CD4-positive, alpha-beta T cell (primary cell): ENCODE measurements at regions of chr4 and their contacts with region 1.

Region 1: DNA sequence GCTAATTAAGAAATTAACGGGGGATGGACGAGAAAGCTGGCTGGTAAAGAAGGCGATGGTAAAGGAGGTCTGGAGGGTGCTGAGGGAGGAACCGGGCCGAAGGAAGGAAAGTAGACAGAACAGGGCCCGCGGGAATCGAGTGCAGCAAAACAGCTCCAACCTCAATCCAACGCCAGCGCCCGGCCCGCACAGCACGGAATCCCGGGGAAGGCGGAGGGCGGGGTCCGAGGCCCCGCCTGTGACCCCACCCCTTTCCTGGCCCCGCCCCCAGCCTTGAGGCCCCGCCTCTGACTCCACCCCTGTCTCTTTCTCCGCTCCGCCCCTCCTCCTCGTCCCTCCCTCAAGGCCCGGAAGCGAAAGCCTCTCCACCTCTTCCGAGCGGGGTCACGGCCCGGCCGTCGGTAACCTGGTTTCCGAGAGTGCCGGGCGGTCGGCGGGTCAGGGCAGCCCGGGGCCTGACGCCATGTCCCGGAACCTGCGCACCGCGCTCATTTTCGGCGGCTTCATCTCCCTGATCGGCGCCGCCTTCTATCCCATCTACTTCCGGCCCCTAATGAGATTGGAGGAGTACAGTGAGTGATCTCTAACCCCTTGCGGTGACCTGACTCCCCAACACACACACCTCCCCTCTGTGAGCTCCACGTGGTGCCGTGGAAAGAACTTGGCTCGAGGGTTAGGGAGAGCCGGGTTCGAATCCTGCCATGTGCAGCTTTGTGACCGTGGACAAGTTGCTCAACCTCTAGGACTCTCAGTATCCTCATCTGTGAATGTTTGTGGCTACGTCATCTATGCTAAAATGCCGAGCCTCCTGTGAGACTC is at the start of gene SMIM20:
- DNase-seq: peak; percentile 82 to 96 (median 86)
- ATAC-seq: peak; percentile 89
- H3K4me3 ChIP-seq: peak within 1 kb of the TSS; percentile 92
- H3K4me3 Mint-ChIP-seq: peak within 1 kb of the TSS; percentile 94
- H3K27ac ChIP-seq: peak within 1 kb of the TSS; percentile 79 to 85
- H3K27ac Mint-ChIP-seq: peak within 1 kb of the TSS; percentile 96
- H3K4me1 ChIP-seq: peaks cover 25% of the 10 kb centered on the region
- H3K4me1 Mint-ChIP-seq: peaks cover 26% of the 10 kb centered on the region
- H3K27me3 ChIP-seq: no peaks in the 10 kb centered on the region
- H3K27me3 Mint-ChIP-seq: no peaks in the 10 kb centered on the region
- CTCF ChIP-seq: no peak
- total RNA-seq, gene SMIM20: 7.2 to 9.1 TPM

Region 2: GRCh38 chr4:24584175-24584850 is 1329.7 kb before region 1 on chr4 and contains the start of gene DHX15:
- CTCF ChIA-PET with region 1: no interaction called
- POLR2A ChIA-PET with region 1: no interaction called
- intact Hi-C with region 1: loop called in 1 of 2 experiments (anchors 10 kb)
- DNase-seq: peak; percentile 83 to 99 (median 90)
- ATAC-seq: peak; percentile 93
- H3K4me3 ChIP-seq: peak within 1 kb of the TSS; percentile 95
- H3K4me3 Mint-ChIP-seq: peak within 1 kb of the TSS; percentile 96
- H3K27ac ChIP-seq: peak within 1 kb of the TSS; percentile 94 to 96
- H3K27ac Mint-ChIP-seq: peak within 1 kb of the TSS; percentile 86
- H3K4me1 ChIP-seq: peaks cover 28% of the 10 kb centered on the region
- H3K4me1 Mint-ChIP-seq: peaks cover 41% of the 10 kb centered on the region
- H3K27me3 ChIP-seq: no peaks in the 10 kb centered on the region
- H3K27me3 Mint-ChIP-seq: peaks cover 5% of the 10 kb centered on the region
- CTCF ChIP-seq: no peak
- total RNA-seq, gene DHX15: 208 to 209 TPM

Region 3: DNA sequence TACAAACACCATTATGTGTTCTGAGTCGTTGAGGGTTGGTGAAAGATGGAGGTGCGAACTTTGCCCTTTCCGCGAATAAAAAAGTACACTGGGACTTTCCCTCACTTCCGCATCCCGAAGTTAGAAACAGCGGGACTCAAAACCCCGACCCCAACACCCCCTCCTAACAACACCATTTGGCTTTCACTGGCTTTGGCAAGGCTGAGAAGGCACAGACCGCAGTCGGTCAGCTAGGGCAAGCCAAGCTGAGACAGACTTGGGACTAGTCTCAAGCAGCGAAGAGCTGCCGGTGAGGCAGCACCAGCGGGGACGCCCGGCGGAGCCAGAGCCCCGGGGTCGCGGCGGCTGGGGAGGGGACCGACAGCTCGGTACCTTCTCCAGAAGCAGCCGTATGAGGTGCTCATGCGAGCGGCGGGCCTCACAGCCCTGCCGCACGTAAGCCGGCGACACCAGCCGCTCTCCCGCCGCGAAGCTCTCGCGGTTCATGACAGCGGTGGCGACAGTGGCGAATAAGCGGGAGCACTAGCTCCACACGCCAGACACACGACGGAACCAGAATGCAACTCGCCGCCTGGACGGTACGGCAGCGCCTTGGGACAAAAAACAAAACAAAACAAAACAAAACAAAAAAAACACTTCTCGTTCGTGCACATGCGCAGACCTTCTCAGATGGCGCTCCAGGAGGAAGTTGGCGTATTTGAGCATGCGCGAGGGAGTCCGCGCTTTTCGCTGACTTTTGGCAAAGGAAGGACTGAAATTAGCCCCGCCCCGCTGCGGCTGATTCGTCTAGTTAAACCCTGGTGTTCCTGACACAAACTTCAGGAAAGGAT is 754.0 kb before region 1 on chr4 and contains the start of gene SEPSECS:
- CTCF ChIA-PET with region 1: no interaction called
- POLR2A ChIA-PET with region 1: interaction called, 3 read pairs
- intact Hi-C with region 1: loop called in 1 of 2 experiments (anchors 10 kb)
- DNase-seq: peak; percentile 84 to 98 (median 92)
- ATAC-seq: peak; percentile 82
- H3K4me3 ChIP-seq: peak within 1 kb of the TSS; percentile 91
- H3K4me3 Mint-ChIP-seq: peak within 1 kb of the TSS; percentile 93
- H3K27ac ChIP-seq: peak within 1 kb of the TSS; percentile 97 to 98
- H3K27ac Mint-ChIP-seq: peak within 1 kb of the TSS; percentile 96
- H3K4me1 ChIP-seq: peaks cover 26% of the 10 kb centered on the region
- H3K4me1 Mint-ChIP-seq: peaks cover 68% of the 10 kb centered on the region
- H3K27me3 ChIP-seq: no peaks in the 10 kb centered on the region
- H3K27me3 Mint-ChIP-seq: no peaks in the 10 kb centered on the region
- CTCF ChIP-seq: no peak
- total RNA-seq, gene SEPSECS: 18.5 to 18.7 TPM

Region 4: DNA sequence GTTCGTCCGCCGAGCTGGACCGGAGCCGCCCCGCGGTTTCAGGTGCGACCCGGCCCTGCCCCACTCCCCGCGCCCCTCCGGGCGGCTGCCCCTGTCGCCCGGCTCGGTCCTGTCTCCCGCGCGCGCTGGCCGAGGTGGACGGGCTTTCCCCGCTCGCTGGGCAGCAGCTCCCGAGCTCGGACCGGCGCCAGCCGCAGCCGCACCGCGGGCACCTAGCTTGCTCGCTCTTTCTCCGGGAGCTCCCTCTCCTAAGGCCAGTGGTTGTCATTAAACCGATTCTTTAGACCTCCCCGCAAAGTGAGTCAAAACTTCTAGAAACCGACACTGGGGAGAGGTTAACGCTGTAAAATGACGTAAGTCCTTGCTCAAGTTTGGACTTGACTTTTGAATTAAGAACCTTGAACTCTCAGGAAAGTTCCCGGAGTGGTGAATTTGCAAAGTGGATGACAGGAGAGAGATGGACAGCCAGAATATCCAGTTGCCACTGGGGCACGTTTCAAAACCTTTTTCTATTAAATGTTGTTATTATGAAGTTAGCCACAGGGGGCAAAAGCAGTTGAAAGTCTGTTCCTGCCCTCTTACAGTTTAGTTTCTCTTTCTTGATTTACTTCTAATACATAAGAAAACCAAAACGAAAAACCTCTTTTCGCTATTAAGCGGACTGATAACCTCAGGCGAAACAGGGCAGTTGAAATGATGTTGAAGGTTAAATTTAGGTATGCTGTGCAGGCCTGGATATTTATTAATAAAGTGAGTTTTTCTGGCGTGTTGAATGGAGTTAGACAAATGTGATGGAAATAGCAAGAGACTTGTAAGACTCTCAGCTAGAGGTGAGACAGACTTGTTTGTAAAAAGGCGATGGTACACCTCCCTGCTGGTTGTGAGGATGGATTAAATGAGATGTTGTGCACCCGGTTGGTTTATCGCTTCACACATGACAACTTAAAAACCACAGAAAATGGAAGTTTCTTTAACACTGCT is 679.4 kb before region 1 on chr4:
- CTCF ChIA-PET with region 1: no interaction called
- POLR2A ChIA-PET with region 1: no interaction called
- intact Hi-C with region 1: loop called in 1 of 2 experiments (anchors 5 kb)
- DNase-seq: peak in 13 of 14 experiments; percentile 5 to 88 (median 18)
- ATAC-seq: peak; percentile 51
- H3K4me3 ChIP-seq: peak overlapping the region; percentile 86
- H3K4me3 Mint-ChIP-seq: peak overlapping the region; percentile 87
- H3K27ac ChIP-seq: peak overlapping the region; percentile 71 to 88
- H3K27ac Mint-ChIP-seq: peak overlapping the region; percentile 91
- H3K4me1 ChIP-seq: peaks cover 29% of the 10 kb centered on the region
- H3K4me1 Mint-ChIP-seq: peaks cover 41% of the 10 kb centered on the region
- H3K27me3 ChIP-seq: no peaks in the 10 kb centered on the region
- H3K27me3 Mint-ChIP-seq: no peaks in the 10 kb centered on the region
- CTCF ChIP-seq: peak; percentile 70

Region 5: DNA sequence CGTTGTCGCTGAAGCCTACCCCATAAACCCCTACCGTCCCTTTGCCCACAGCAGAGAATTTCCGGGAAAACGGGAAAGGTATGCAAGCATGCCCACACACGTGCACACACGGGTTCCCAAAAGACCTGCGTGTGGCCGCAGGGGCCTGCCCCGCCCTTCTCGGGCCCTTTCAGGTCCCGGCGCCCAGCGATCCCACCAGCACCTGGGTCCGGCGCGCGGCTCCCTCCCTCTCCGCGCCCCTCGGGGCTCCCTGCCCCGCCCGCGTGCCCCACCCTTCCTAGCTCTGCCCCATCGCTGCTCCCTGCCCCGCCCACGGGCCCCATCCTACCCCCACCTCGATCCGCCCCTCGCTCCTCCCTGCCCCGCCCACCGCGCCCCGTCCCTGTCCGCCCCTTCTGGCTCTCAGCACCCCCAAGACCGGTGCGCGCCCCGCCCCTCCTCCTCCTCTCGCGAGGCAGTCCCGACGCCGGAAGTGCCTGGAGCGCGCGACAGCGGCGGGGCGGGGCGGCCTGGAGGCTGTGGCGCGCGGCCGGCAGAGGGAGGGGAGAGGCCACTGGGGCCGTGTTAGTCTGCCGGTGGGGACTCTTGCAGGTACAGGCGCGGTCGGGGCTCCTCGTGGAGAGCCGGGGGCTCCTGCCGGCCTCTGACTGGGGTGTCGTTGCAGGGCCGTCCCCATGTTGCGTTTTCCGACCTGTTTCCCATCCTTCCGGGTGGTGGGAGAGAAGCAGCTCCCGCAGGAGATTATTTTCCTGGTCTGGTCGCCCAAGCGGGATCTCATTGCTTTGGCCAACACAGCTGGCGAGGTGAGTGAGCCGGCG is 537.1 kb before region 1 on chr4 and contains the start of gene ANAPC4:
- CTCF ChIA-PET with region 1: no interaction called
- POLR2A ChIA-PET with region 1: no interaction called
- intact Hi-C with region 1: loop called in 1 of 2 experiments (anchors 5 kb)
- DNase-seq: peak; percentile 95 to 99 (median 97)
- ATAC-seq: peak; percentile 94
- H3K4me3 ChIP-seq: peak within 1 kb of the TSS; percentile 94
- H3K4me3 Mint-ChIP-seq: no peak within 1 kb of the TSS
- H3K27ac ChIP-seq: peak within 1 kb of the TSS; percentile 42 to 48
- H3K27ac Mint-ChIP-seq: peak within 1 kb of the TSS; percentile 81
- H3K4me1 ChIP-seq: peaks cover 34% of the 10 kb centered on the region
- H3K4me1 Mint-ChIP-seq: peaks cover 7% of the 10 kb centered on the region
- H3K27me3 ChIP-seq: no peaks in the 10 kb centered on the region
- H3K27me3 Mint-ChIP-seq: no peaks in the 10 kb centered on the region
- CTCF ChIP-seq: no peak
- total RNA-seq, gene ANAPC4: 24.4 to 26.0 TPM

Region 6: GRCh38 chr4:25862411-25863346 is 51.4 kb before region 1 on chr4 and contains the start of gene SEL1L3:
- CTCF ChIA-PET with region 1: interaction called, 5 read pairs
- POLR2A ChIA-PET with region 1: interaction called, 62 read pairs
- intact Hi-C with region 1: loop called (anchors 1 to 2 kb)
- DNase-seq: peak in 12 of 14 experiments; percentile 30 to 74 (median 49)
- ATAC-seq: peak; percentile 38
- H3K4me3 ChIP-seq: peak within 1 kb of the TSS; percentile 76
- H3K4me3 Mint-ChIP-seq: peak within 1 kb of the TSS; percentile 95
- H3K27ac ChIP-seq: peak within 1 kb of the TSS; percentile 55 to 94
- H3K27ac Mint-ChIP-seq: peak within 1 kb of the TSS; percentile 89
- H3K4me1 ChIP-seq: peaks cover 44% of the 10 kb centered on the region
- H3K4me1 Mint-ChIP-seq: peaks cover 41% of the 10 kb centered on the region
- H3K27me3 ChIP-seq: no peaks in the 10 kb centered on the region
- H3K27me3 Mint-ChIP-seq: no peaks in the 10 kb centered on the region
- CTCF ChIP-seq: no peak
- total RNA-seq, gene SEL1L3: 34.9 to 36.5 TPM

Region 7: DNA sequence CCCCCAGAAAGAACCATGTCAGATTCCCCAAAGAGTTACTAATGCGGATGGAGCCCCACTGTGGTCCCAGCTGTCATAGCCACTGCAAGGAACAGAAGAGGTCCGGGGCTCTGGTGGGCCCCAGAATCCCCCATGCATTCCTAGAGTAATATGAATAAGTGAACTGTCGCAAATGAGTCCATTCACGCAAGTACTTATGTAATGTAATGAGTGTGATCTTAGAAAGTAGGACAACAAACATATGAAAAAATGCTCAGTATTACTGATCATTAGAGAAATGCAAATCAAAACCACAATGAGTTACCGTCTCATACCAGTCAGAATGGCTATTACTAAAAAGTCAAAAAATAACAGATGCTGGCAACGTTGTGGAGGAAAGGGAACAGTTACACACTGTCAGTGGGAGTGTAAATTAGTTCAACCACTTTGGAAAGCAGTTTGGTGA is 265.3 kb after region 1 on chr4:
- CTCF ChIA-PET with region 1: no interaction called
- POLR2A ChIA-PET with region 1: no interaction called
- intact Hi-C with region 1: no loop called
- DNase-seq: no peak
- ATAC-seq: no peak
- H3K4me3 ChIP-seq: no peak overlapping the region
- H3K4me3 Mint-ChIP-seq: no peak overlapping the region
- H3K27ac ChIP-seq: no peak overlapping the region
- H3K27ac Mint-ChIP-seq: no peak overlapping the region
- H3K4me1 ChIP-seq: peaks cover 10% of the 10 kb centered on the region
- H3K4me1 Mint-ChIP-seq: no peaks in the 10 kb centered on the region
- H3K27me3 ChIP-seq: no peaks in the 10 kb centered on the region
- H3K27me3 Mint-ChIP-seq: no peaks in the 10 kb centered on the region
- CTCF ChIP-seq: no peak

Region 8: DNA sequence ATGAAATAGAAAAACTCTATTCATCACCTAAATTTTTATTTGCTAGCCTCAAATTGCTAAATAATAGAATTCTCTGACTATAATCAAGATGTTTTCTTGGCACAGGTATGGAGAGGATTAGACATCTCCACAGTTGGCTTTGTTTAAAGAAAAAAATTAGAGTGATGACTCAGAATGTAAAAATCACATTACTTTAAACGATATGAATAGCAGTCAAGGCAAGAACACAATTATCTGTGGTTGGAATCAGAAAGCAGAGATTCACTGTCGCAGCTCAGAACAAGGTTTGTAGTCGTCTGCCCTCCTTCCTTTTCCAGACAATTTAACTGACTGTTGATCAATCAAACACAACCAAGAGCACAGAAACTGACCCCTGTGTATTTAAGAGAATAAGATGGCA is 608.4 kb after region 1 on chr4:
- CTCF ChIA-PET with region 1: no interaction called
- POLR2A ChIA-PET with region 1: no interaction called
- intact Hi-C with region 1: no loop called
- DNase-seq: no peak
- ATAC-seq: no peak
- H3K4me3 ChIP-seq: no peak overlapping the region
- H3K4me3 Mint-ChIP-seq: no peak overlapping the region
- H3K27ac ChIP-seq: no peak overlapping the region
- H3K27ac Mint-ChIP-seq: no peak overlapping the region
- H3K4me1 ChIP-seq: no peaks in the 10 kb centered on the region
- H3K4me1 Mint-ChIP-seq: no peaks in the 10 kb centered on the region
- H3K27me3 ChIP-seq: peaks cover 0 to 6% of the 10 kb centered on the region in 2 experiments
- H3K27me3 Mint-ChIP-seq: peaks cover 5% of the 10 kb centered on the region
- CTCF ChIP-seq: no peak

Region 9: DNA sequence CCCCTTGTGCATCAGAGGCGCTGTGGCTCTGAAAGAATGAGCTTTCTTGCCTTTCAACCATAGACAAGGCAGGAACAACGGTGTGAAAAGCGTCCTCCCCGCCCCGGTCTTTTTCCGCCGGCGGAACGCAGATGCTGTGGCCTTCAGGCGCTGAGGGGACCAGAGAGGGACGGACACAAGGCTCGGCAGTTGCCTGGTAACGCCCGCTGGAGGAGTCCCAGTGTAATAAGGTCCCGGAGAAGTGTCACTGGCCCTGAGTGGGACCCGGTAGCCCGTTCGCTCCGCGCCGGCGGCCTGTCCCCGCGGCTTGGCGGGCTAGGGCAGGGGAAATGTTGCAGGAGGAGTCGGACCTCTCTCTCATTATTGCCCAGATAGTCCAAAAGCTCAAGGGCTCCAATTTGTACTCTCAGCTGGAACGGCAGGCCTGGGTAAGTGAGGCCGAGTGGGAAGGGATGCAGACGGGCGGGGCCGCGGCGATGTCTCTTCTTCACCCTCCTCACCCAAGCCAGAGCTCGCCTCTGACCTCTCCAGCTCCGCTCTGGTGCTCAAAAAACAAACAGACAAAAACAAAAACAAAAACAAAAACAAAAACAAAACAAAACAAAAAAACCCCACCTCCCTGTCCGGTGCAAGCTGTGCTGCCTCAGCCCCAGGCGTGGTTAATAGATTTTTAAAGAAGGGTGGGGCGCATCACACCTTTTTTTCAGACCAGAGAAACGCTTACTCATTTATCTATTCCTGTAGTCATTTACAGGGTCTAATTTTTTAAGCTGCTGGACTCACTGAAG is 670.0 kb after region 1 on chr4 and contains the start of gene TBC1D19:
- CTCF ChIA-PET with region 1: no interaction called
- POLR2A ChIA-PET with region 1: interaction called, 4 read pairs
- intact Hi-C with region 1: loop called in 1 of 2 experiments (anchors 5 kb)
- DNase-seq: peak; percentile 78 to 93 (median 86)
- ATAC-seq: peak; percentile 87
- H3K4me3 ChIP-seq: peak within 1 kb of the TSS; percentile 76
- H3K4me3 Mint-ChIP-seq: peak within 1 kb of the TSS; percentile 96
- H3K27ac ChIP-seq: peak within 1 kb of the TSS; percentile 81 to 85
- H3K27ac Mint-ChIP-seq: peak within 1 kb of the TSS; percentile 95
- H3K4me1 ChIP-seq: peaks cover 11% of the 10 kb centered on the region
- H3K4me1 Mint-ChIP-seq: peaks cover 28% of the 10 kb centered on the region
- H3K27me3 ChIP-seq: no peaks in the 10 kb centered on the region
- H3K27me3 Mint-ChIP-seq: peaks cover 3% of the 10 kb centered on the region
- CTCF ChIP-seq: no peak
- total RNA-seq, gene TBC1D19: 4.0 to 4.8 TPM